ENCODE measurements at regions of chr12 and their contacts with region 1.

Region 1: DNA sequence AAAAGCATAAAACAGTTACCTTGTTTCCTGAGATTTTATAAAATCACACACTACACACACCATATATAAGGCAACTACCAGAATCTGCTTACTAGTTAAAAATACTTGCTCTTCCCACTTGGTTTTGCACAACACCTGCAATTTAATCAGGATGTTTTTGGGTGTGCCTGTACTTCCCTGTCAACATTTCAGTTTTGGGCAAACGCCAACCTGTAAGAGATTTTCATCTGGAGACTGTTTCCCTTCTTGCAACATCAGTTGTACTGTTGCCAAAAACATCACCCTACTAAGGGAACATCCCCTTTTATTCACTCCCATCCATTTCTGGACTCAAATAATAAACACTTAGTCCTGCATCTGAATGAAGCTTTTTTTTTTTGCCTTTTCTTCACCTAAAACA is 172.3 kb downstream of the DUSP6 start:
- DNase-seq: no peak
- H3K4me3 Mint-ChIP-seq: peak overlapping the region; percentile 48
- H3K27ac Mint-ChIP-seq: peak overlapping the region; percentile 95
- H3K4me1 Mint-ChIP-seq: peaks cover 62% of the 10 kb centered on the region
- H3K27me3 Mint-ChIP-seq: no peaks in the 10 kb centered on the region

Region 2: DNA sequence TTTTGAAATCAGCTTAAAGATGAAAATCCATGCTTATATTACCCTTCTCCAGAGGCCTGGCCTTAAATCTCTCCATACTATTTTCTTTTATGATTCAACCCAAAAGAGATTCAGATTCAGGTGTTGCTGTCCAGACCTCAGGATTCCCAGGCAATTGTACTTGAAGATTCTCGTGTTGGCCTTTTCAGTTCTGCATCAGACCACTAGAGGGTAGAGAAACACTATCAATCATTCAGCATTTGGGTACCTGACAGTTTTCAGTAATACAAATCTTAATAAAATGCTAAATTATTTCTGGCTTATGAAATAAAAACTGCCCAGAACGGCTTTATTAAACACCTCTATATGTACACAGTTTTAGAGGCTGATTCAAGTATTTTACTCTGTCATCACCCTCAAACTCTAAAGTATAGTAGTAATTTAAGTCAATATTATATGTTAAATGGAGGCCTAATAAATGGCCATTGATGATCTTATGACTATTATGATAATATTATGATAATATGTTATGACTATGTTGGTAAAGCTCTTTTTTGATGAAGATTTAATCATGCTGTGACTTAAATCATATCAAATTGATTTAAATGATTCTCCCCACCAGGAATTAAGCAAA is 128.8 kb before region 1 on chr12:
- intact Hi-C with region 1: loop called (anchors 2 kb)
- DNase-seq: no peak
- H3K4me3 Mint-ChIP-seq: no peak overlapping the region
- H3K27ac Mint-ChIP-seq: no peak overlapping the region
- H3K4me1 Mint-ChIP-seq: peaks cover 31% of the 10 kb centered on the region
- H3K27me3 Mint-ChIP-seq: no peaks in the 10 kb centered on the region

Region 3: DNA sequence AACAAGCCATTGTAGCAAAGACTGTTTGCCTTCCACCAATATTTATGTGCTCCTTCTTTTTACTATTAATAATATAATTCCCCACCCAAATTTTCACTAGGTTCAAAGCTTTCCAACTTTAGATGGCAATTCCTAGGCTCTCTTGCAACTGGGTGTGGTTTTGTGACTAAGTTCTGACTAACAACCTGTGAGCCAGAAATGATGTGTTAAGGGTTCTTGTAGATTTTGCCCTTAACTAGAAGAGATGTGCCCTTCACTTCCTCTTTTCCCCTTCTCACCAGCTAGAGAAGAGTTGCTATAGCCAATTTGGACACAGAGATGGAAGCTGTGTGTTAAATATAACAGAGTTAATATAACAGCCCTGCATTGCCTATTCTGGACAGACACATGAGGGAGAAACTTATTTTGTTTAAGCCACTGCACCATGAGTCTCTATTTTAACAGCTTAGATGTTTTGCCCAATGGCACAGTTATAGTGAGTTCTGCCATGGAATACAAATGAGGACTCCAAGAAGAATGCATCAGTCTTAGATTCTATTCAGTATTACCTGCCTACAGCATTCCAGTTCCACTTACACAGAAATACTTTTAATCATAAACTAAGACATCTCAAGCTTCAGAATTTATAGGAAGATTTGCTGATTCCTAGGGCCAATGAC is 43.9 kb before region 1 on chr12:
- intact Hi-C with region 1: loop called (anchors 1 kb)
- DNase-seq: no peak
- H3K4me3 Mint-ChIP-seq: no peak overlapping the region
- H3K27ac Mint-ChIP-seq: peak overlapping the region; percentile 58
- H3K4me1 Mint-ChIP-seq: peaks cover 33% of the 10 kb centered on the region
- H3K27me3 Mint-ChIP-seq: peaks cover 2% of the 10 kb centered on the region

Region 4: DNA sequence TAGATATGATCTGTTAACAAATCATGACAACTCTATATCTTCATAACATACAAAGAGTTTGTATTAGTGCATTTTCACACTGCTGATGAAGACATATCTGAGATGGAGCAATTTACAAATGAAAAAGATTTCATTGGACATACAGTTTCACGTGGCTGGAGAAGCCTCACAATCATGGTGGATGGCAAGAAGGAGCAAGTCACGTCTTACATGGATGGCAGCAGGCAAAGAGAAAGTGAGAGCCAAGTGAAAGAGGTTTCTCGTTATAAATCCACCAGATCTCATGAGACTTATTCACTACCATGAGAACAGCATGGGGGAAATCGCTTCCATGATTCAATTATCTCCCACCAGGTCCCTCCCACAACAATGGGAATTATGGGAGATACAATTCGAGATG is 14.7 kb after region 1 on chr12:
- intact Hi-C with region 1: loop called (anchors 2 kb)
- DNase-seq: no peak
- H3K4me3 Mint-ChIP-seq: no peak overlapping the region
- H3K27ac Mint-ChIP-seq: no peak overlapping the region
- H3K4me1 Mint-ChIP-seq: peaks cover 6% of the 10 kb centered on the region
- H3K27me3 Mint-ChIP-seq: no peaks in the 10 kb centered on the region

Region 5: DNA sequence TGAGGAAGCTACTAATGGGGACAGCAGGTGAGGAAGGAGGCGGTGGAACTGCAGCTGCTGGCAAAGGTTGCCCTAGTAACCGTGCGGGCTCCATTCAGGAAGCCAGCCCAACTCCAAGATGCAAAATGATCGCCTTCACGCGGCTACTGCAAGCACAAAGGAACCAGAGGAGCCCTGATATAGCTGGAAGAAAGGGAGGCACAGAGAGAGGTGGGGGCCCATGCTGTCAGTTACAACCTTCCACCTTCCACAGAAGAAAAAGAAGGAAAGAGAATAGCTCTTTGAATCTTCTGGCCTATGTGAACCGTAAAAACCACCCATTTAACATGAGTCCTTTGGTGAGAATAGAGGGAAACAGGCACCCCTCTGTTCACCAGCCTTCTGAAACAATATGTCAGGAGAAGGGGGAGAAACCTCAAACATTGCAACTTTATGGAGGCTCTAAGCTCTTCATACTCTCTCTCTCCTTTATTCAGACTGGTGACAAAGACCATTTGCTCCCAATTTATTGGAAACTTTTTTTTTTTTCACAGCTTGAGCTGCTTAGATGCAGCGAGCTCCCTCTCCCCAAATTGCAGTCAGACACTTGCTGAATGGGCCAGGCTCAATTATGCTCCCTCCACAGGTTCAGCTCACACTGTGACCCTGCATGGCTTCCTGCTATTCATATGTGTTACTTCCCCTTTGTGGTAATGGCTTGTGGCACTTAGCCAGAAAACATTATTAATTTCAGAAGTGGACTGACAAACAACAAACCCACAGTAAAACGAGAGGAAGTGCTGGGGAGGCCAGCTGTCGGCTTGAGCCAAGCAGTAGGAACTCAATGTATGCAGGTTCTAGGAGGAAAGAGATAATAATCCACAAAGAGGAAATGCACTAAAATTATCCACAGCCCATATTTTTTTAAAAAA is 166.1 kb after region 1 on chr12:
- intact Hi-C with region 1: no loop called
- DNase-seq: peak; percentile 53
- H3K4me3 Mint-ChIP-seq: peak overlapping the region; percentile 80
- H3K27ac Mint-ChIP-seq: peak overlapping the region; percentile 88
- H3K4me1 Mint-ChIP-seq: peaks cover 70% of the 10 kb centered on the region
- H3K27me3 Mint-ChIP-seq: no peaks in the 10 kb centered on the region

Region 6: DNA sequence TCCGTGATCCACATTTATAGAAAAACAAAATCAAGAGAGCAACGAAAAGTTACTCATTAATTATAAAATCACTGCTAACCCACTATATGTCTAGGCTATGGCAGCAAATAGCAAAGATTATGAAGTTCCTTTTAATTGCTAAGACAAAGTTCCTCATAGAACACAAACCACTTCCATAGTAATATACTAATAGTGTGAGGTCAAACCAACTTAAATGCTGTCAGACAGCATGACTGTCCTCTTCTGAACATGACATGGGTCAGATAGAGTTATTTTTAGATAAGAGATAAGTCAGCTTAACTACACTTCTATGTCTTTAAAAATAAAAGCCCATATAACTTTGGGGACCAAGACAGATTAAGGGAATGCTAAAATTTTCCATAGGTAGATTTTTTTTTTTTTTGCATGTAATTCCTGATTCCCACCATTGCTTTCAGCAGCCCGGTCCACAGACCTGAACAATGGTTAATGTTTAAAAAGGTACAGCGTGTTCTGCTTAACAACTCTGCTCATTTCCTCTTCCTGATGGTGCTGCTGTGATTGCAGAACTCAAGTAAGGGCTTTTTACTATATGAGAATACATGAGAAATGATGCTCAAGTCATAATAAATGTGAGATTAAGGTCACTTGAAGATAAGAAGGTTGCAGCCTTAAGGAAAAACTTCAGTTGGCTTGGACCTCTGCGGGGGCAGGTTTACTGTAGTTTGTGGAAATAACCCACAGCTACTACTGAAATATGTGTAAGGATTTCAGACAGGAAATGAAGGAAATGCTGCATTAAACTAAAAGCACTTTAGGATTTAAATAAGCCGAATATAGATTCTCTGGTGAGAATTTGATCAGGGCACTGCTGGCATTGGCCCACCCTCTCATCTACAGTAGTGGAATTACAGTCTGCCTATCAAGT is 210.0 kb after region 1 on chr12:
- intact Hi-C with region 1: loop called (anchors 2 kb)
- DNase-seq: no peak
- H3K4me3 Mint-ChIP-seq: no peak overlapping the region
- H3K27ac Mint-ChIP-seq: peak overlapping the region; percentile 78
- H3K4me1 Mint-ChIP-seq: peaks cover 33% of the 10 kb centered on the region
- H3K27me3 Mint-ChIP-seq: no peaks in the 10 kb centered on the region

Region 7: DNA sequence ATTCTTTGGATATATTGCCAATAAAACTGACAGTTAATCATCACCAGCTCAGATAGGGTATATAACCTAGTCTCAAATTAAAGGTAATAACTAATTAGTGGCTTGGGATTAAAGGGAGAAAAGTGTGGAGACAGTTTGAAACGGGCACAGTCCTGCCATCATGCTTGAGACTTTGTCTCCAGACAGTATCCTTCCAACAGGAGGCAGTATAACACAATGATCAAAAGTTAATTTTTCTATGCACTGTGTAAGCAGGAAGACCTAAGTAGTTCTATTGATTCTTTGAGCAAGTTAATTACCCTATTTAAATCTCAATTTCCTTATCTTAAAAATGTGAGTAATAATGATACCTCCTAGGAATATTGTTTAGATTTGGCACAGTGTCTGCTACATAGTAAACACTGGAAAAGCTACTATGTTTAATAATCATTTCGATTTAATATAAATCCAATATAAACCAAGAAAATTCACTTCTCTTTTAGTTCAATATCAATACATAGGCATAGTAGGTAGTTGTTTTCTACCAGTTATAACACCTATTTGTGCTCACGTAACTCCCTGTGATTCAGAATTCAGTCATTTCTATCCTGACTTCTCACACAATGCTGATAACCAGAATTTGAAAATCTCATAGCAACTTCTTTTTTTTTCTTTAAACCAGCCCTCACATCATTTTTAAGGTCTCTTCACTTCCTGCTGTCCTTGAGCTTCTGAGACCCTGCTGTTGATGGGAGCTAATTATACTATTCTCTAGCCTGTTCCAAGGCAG is 290.9 kb after region 1 on chr12:
- intact Hi-C with region 1: loop called (anchors 2 kb)
- DNase-seq: no peak
- H3K4me3 Mint-ChIP-seq: no peak overlapping the region
- H3K27ac Mint-ChIP-seq: peak overlapping the region; percentile 22
- H3K4me1 Mint-ChIP-seq: peaks cover 76% of the 10 kb centered on the region
- H3K27me3 Mint-ChIP-seq: no peaks in the 10 kb centered on the region

Measured in activated T-helper 1 cell treated with anti-CD3 and anti-CD28 coated beads, Interleukin-12 subunit alpha, Interleukin-12 subunit beta, Interleukin-2, Interleukin-4 antibody, amounts not matched to agents 30 ng/mL and 10 ng/mL and 1 ng/mL, durations not matched to agents 14 hours and 24 hours and 36 hours (primary cell).